Gastrocnemius medialis (tissue), 4 donors: ENCODE measurements at regions of chrX and their contacts with region 1.

Region 1: DNA sequence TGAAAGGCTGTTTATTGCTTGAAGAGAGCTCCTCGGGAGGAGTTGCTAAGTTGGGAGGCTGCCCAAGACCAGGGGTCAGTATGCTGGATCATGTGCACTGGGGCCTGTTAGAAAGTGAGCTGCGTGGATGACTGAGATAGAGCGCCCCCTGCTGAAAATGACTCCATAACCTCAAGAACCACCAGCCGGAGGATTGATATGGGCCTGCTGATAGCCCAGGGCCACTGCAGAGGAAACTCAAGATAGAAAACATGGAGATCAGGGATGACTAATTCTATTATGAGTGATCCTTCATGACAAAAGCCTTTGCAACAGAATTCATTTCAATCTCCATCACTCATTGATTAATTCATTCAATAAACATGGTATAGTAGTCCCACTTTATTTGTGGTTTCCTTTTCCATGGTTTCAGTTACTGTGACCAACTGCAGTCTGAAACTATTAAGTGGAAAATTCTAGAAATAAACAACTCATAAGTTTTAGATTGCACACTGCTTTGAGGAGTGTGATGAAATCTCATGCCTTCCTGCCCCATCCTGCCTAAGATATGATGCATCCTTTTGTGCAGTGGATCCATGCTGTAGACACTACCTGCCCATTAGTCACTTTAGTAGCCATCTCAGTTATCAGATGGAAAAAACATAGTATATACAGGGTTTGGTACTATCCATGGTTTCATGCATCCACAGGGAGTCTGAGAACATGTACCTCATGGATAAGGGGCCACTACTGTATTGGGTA is 126.7 kb upstream of the MBNL3 start:
- DNase-seq: no peak
- ATAC-seq: no peak
- H3K4me3 ChIP-seq: no peak overlapping the region
- H3K27ac ChIP-seq: no peak overlapping the region
- H3K4me1 ChIP-seq: no peaks in the 10 kb centered on the region
- H3K27me3 ChIP-seq: no peaks in the 10 kb centered on the region
- CTCF ChIP-seq: peak in 1 of 5 experiments; percentile 22
- POLR2A ChIP-seq: no peak

Region 2: DNA sequence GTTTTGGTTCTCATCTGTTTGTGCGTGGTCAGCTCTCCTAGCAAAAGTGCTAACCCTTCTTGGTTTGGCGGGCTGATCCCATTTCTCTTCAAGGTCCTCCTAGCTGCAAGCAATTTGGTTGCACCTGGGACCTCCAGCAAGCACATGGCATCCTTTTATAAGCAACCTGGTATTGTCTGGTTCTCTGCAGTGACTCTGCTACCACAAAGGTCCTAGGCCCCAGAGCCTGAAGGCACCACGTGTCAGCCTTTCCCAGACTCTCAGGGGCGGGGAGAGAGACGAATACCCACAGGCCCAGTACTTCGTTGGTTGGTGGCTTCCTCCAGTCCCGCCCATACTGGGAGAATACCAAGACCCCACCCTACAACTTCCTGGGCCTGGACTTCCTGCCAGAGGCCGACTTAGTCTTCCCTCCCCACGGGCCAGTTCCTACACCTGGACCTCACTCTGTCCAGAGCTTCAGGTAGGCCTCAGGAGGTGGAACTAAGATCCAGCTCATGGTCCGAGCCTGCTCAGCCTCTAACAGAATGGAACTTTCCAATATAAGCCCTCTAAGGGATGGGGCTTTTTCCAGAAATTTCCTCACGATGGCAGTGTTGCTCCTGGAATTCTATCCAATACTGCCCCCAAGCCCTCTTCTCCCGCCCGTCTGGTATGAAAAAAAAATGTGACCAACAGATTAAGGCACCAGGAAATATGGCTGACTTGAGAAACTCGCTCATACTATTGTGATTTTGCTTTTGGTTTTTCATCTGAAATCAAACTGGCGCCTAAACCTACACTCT is 785.0 kb before region 1 on chrX:
- in situ Hi-C with region 1: loop called in 1 of 4 experiments (anchors 25 kb)
- intact Hi-C with region 1: no loop called
- DNase-seq: peak; percentile 5 to 32
- ATAC-seq: peak in 1 of 2 donors; percentile 60
- H3K4me3 ChIP-seq: peak overlapping the region in 2 of 4 donors; percentile 42 to 45
- H3K27ac ChIP-seq: peak overlapping the region; percentile 49 to 71 (median 56)
- H3K4me1 ChIP-seq: peaks cover 0 to 10% of the 10 kb centered on the region in 2 donors
- H3K27me3 ChIP-seq: no peaks in the 10 kb centered on the region
- CTCF ChIP-seq: peak in 4 of 5 experiments; percentile 29 to 73 (median 60)
- POLR2A ChIP-seq: no peak

Region 3: GRCh38 chrX:132092439-132093065 is 523.0 kb before region 1 on chrX:
- in situ Hi-C with region 1: loop called in 1 of 4 experiments (anchors 25 kb)
- intact Hi-C with region 1: no loop called
- DNase-seq: peak; percentile 3 to 28
- ATAC-seq: peak; percentile 42 to 85
- H3K4me3 ChIP-seq: no peak overlapping the region
- H3K27ac ChIP-seq: no peak overlapping the region
- H3K4me1 ChIP-seq: no peaks in the 10 kb centered on the region
- H3K27me3 ChIP-seq: no peaks in the 10 kb centered on the region
- CTCF ChIP-seq: peak; percentile 54 to 73 (median 62)
- POLR2A ChIP-seq: no peak